T-cell (primary cell): ENCODE measurements at regions of chr16 and their contacts with region 1.

Region 1: DNA sequence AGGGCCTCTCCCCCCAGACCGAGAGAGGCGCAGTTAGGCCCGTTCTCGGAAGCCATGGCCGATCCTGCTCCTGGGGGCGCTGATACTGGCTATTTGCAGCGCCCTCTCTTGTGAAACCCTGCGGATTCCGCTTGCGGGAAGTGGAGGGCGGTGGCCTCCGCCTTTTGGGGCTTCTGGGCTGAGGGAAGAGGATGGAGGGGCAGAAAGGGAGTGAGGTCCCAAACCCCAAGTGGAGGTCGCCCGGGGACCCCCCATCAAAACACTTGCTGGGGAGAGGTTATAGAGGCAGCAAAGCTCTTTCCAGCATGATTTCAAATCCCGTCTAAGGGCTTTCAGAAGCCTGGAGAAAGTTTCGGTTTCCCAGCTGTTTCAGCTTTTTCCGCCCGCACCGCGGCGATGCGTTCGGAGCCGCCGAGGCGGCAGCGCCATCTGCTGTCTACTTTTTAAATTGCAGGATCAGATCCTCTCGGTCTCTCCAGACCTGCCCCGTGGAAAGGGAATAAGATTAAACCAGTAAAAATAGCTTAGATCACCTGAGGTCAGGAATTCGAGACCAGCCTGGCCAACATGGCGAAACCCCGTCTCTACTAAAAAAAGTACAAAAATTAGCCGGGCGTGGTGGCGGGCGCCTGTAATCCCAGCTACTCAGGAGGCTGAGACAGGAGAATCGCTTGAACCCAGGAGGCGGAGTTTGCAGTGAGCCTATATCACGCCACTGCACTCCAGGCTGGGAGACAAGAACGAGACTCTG is 15.8 kb downstream of the SNX20 start:
- DNase-seq: peak; percentile 39 to 89 (median 76)
- ATAC-seq: peak; percentile 53 to 73 (median 60)
- H3K4me3 ChIP-seq: peak overlapping the region; percentile 51 to 59
- H3K4me3 Mint-ChIP-seq: peak overlapping the region; percentile 72 to 75 (median 73)
- H3K27ac ChIP-seq: no peak overlapping the region
- H3K27ac Mint-ChIP-seq: peak overlapping the region; percentile 81 to 85
- H3K4me1 ChIP-seq: peaks cover 6 to 38% of the 10 kb centered on the region in 2 experiments
- H3K4me1 Mint-ChIP-seq: peaks cover 37 to 44% (median 41%) of the 10 kb centered on the region in 3 donors
- H3K27me3 ChIP-seq: no peaks in the 10 kb centered on the region
- H3K27me3 Mint-ChIP-seq: no peaks in the 10 kb centered on the region

Region 2: GRCh38 chr16:50354629-50355456 is 310.5 kb before region 1 on chr16:
- CTCF ChIA-PET with region 1: interaction called, 3 to 14 read pairs
- POLR2A ChIA-PET with region 1: no interaction called
- DNase-seq: peak in 2 of 35 experiments; percentile 34 to 51
- ATAC-seq: no peak
- H3K4me3 ChIP-seq: no peak overlapping the region
- H3K4me3 Mint-ChIP-seq: no peak overlapping the region
- H3K27ac ChIP-seq: no peak overlapping the region
- H3K27ac Mint-ChIP-seq: peak overlapping the region; percentile 0 to 64
- H3K4me1 ChIP-seq: no peaks in the 10 kb centered on the region
- H3K4me1 Mint-ChIP-seq: peaks cover 24 to 54% (median 25%) of the 10 kb centered on the region in 3 donors
- H3K27me3 ChIP-seq: no peaks in the 10 kb centered on the region
- H3K27me3 Mint-ChIP-seq: no peaks in the 10 kb centered on the region

Region 3: GRCh38 chr16:50681021-50681885 is 15.9 kb after region 1 on chr16 and contains the start of gene SNX20:
- CTCF ChIA-PET with region 1: interaction called, 7 to 16 read pairs
- POLR2A ChIA-PET with region 1: interaction called in 1 of 2 experiments, 4 read pairs
- DNase-seq: peak; percentile 44 to 82 (median 68)
- ATAC-seq: peak; percentile 81 to 89 (median 86)
- H3K4me3 ChIP-seq: peak within 1 kb of the TSS; percentile 89 to 100
- H3K4me3 Mint-ChIP-seq: peak within 1 kb of the TSS; percentile 90 to 94 (median 94)
- H3K27ac ChIP-seq: peak within 1 kb of the TSS; percentile 76
- H3K27ac Mint-ChIP-seq: peak within 1 kb of the TSS; percentile 98 to 99
- H3K4me1 ChIP-seq: peaks cover 62 to 94% of the 10 kb centered on the region in 2 experiments
- H3K4me1 Mint-ChIP-seq: peaks cover 90 to 95% (median 92%) of the 10 kb centered on the region in 3 donors
- H3K27me3 ChIP-seq: no peaks in the 10 kb centered on the region
- H3K27me3 Mint-ChIP-seq: no peaks in the 10 kb centered on the region
- total RNA-seq, gene SNX20: 38.8 to 85.2 (median 69.6) TPM

Region 4: DNA sequence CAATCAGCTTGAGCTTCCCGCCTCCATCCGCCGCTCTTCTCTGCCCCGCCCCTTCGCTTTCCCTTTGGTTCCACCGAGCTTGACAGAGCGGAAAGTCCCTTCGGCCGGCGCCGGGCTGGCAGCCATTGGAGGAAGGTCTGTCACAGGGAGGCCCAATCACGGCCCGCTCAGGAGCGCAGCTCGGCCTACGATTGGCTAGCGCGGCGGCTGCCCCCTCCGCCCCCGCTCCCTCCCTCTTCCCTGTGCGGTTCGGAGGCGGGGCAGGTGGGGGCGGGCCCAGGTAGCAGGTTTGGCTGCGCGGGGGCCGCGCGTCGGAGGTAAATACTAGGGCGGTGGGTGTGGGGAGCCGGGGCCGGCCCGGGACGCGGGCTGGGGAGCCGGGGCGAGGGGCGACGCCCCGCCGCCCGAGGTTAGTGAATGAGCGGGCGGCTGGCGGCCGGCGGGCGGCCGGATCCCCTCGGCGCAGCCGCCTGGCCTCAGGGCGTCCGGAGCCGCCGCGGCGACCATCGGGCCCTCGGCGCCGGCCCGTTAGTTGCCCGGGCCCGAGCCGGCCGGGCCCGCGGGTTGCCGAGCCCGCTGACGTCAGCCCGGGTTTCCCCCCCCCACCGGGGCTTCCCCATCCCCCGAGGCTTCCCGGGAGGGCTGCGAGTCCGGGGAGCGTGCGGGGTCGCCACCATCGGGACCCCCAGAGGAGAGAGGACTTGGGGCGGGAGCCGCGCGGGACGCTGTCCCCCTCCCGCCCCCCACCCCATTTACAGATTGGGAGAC is 76.7 kb after region 1 on chr16 and contains the start of gene CYLD:
- CTCF ChIA-PET with region 1: interaction called, 8 to 30 read pairs
- POLR2A ChIA-PET with region 1: interaction called, 3 to 4 read pairs
- DNase-seq: peak; percentile 93 to 100 (median 100)
- ATAC-seq: peak; percentile 90
- H3K4me3 ChIP-seq: peak within 1 kb of the TSS; percentile 95 to 99
- H3K4me3 Mint-ChIP-seq: peak within 1 kb of the TSS; percentile 93 to 98 (median 95)
- H3K27ac ChIP-seq: peak within 1 kb of the TSS; percentile 100
- H3K27ac Mint-ChIP-seq: peak within 1 kb of the TSS; percentile 97 to 98
- H3K4me1 ChIP-seq: peaks cover 17 to 26% of the 10 kb centered on the region in 2 experiments
- H3K4me1 Mint-ChIP-seq: peaks cover 40 to 58% (median 52%) of the 10 kb centered on the region in 3 donors
- H3K27me3 ChIP-seq: no peaks in the 10 kb centered on the region
- H3K27me3 Mint-ChIP-seq: no peaks in the 10 kb centered on the region
- total RNA-seq, gene CYLD: 243 to 380 (median 294) TPM

Region 5: GRCh38 chr16:50747207-50747956 is 82.1 kb after region 1 on chr16:
- CTCF ChIA-PET with region 1: interaction called, 8 to 30 read pairs
- POLR2A ChIA-PET with region 1: interaction called, 3 to 4 read pairs
- DNase-seq: peak in 13 of 35 experiments; percentile 7 to 77 (median 30)
- ATAC-seq: peak; percentile 74 to 79 (median 77)
- H3K4me3 ChIP-seq: peak overlapping the region; percentile 15 to 37
- H3K4me3 Mint-ChIP-seq: peak overlapping the region; percentile 72 to 98 (median 81)
- H3K27ac ChIP-seq: peak overlapping the region; percentile 100
- H3K27ac Mint-ChIP-seq: peak overlapping the region; percentile 95 to 97
- H3K4me1 ChIP-seq: peaks cover 16 to 62% of the 10 kb centered on the region in 2 experiments
- H3K4me1 Mint-ChIP-seq: peaks cover 71 to 77% (median 76%) of the 10 kb centered on the region in 3 donors
- H3K27me3 ChIP-seq: no peaks in the 10 kb centered on the region
- H3K27me3 Mint-ChIP-seq: no peaks in the 10 kb centered on the region